ENCODE measurements at regions of chr12 and their contacts with region 1.

Region 1: GRCh38 chr12:118061011-118061875 is at the start of gene WSB2:
- DNase-seq: peak; percentile 26
- H3K4me3 ChIP-seq: peak within 1 kb of the TSS; percentile 77 to 93 (median 84)
- H3K27ac ChIP-seq: peak within 1 kb of the TSS; percentile 82
- H3K4me1 ChIP-seq: peaks cover 11% of the 10 kb centered on the region
- H3K27me3 ChIP-seq: no peaks in the 10 kb centered on the region
- CTCF ChIP-seq: no peak
- total RNA-seq, gene WSB2: 93.5 to 165 TPM

Region 2: GRCh38 chr12:118135788-118136558 is 74.7 kb after region 1 on chr12 and contains the start of gene PEBP1:
- CTCF ChIA-PET with region 1: no interaction called
- dilution Hi-C with region 1: no loop called
- in situ Hi-C with region 1: no loop called
- intact Hi-C with region 1: loop called (anchors 2 kb)
- DNase-seq: peak; percentile 88
- H3K4me3 ChIP-seq: peak within 1 kb of the TSS; percentile 87 to 91 (median 90)
- H3K27ac ChIP-seq: peak within 1 kb of the TSS; percentile 56
- H3K4me1 ChIP-seq: peaks cover 5% of the 10 kb centered on the region
- H3K27me3 ChIP-seq: no peaks in the 10 kb centered on the region
- CTCF ChIP-seq: no peak
- total RNA-seq, gene PEBP1: 146 to 175 TPM

Region 3: DNA sequence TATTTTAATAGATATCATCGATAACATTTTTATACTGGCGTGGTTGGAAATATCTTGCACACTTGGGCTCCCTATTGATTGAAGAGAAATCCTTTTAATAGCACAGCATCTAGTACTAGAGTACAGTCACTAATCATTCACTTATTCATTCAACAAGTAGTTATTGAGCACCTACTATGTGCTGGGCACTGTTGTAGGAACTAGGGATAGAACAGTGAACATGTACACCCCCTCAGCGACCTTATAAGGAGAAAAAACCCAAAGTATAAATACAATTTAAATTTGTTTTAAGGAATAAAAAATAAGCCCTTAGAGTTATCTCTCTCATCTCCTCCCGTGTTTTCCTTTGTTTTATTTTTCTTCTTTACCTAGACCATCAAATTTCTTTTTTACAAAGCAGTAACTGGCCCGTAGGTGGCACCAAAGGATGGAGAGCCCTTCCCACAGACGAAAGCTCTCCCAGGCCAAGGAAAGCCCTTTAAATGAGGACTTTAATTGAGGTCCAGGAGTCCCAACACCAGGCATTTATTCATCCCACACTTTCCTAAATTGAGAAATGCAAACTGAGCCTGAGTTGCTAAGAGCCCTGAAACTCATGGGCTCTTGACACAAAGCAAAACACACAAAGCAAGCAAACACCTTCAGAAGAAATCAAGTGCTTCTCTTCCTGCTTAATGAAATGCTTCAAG is 103.7 kb after region 1 on chr12:
- CTCF ChIA-PET with region 1: no interaction called
- dilution Hi-C with region 1: no loop called
- in situ Hi-C with region 1: no loop called
- intact Hi-C with region 1: no loop called
- DNase-seq: no peak
- H3K4me3 ChIP-seq: no peak overlapping the region
- H3K27ac ChIP-seq: no peak overlapping the region
- H3K4me1 ChIP-seq: no peaks in the 10 kb centered on the region
- H3K27me3 ChIP-seq: no peaks in the 10 kb centered on the region
- CTCF ChIP-seq: peak; percentile 33 to 57